Left colon (tissue), 2 donors: ENCODE measurements at regions of chr5 and their contacts with region 1.

Region 1: DNA sequence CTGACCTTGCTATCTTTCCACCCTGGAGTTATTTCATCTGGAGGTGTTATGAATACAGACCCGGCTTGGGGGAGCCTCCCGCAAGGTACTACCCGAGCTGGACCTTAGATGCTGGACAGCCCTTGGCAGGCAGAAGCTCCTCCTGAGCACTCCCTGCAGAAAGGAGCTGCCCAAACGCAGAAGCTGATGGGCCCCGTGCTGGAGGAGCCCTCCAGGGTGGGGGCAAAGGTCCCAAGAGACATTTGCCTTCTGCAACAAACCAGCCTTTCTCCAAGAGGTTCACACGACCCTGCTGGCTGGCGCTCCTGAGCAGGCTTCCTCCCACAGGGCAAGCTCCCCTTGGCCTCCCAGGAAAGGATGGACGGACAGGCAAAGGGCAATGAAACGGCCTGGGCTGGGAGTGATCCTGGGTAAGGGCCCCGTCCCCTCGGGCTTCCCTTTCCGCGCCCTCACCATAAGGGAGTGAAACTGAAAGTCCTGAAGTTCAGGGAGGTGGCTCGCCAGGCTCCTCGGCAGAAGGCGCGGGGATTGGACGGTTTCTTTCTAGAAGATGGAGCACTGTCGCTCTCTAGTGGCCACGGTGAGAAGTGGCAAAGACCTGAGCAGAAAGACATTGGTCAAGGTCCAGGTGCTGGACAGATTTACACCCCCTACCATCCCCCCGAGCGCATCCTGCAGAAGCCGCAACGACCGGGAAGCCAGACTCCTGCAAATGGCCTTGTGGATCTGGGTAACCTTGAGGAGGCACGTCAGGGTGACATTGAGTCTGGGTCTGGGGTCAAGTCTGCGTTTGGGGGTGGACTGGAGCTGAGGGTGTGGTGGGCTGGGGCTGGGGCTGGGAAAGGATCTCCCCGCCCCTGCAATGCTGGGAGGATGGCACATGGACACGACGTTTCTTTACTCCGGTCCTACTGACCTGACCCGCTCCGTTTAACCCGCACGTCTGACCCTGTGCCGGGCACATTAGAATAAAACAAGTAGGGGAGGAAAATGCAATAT is 56.4 kb downstream of the NEURL1B start:
- DNase-seq: peak; percentile 92 to 93
- ATAC-seq: peak; percentile 85

Region 2: DNA sequence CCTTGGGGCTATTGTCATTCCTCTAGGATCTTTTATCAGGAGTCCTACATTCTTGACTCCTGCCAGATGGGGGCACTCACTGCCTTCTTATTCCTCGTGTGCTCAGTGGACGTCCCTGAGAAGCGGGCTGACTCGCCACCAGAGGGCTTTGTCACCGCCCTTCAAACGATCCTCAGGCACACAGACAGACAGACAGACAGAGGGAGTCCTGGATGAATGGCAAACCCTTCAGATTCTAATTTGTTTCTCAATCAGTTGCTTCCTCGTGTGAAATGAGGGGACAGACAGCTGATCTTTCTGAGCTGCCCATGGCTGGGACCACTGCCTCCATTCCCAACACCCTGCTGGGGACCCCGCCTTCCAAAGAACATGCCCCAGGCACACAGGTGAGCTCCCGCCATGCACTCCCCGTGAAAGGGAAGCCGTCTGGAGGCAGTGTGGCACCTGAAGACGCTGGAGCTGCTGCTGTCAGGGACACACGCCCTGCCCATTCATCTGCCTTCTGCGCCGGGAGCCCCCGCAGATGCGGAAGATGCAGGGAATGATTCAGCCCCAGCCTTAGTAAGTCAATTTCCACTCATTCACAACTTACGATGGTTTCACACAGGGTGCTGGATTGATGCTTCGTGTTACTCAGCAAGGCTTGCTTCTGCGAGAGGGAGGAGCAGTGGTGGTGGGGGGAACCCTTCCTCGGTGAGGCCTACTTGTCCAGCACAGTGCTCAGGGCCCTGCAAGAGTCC is 218.2 kb before region 1 on chr5:
- intact Hi-C with region 1: loop called (anchors 2 to 5 kb)
- DNase-seq: peak; percentile 83 to 87
- ATAC-seq: peak; percentile 99

Region 3: DNA sequence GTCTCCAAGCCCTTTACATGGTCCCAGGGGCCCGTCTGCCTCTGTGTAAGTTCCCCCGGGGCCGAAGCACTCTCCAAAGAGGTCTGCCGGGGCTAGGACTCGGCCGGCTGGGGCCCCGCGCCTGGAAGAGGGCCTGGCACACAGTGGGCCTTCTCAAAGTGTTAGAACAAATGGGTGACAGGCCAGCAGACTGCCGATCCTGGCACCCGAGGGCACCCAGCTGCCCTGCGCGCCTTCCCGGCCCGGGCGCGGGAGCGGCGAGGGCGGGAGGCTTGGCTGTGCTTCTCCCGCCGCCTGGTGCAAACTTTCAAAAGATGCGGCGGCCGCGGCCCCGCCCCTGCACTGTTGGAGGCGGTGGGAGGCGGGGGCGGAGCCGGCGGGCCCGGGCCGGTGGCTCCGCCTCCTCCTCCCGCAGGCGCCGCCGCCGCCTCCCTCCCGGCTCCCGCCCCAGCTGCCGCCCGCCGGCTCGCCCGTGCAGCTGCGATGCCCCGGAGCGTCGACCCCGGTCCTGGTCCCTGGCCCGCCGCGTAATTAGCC is 56.5 kb before region 1 on chr5 and contains the start of gene NEURL1B:
- intact Hi-C with region 1: loop called in 1 of 2 experiments (anchors 10 kb)
- DNase-seq: peak; percentile 85 to 89
- ATAC-seq: peak; percentile 55
- total RNA-seq, gene NEURL1B: 60.5 to 90.8 TPM

Region 4: DNA sequence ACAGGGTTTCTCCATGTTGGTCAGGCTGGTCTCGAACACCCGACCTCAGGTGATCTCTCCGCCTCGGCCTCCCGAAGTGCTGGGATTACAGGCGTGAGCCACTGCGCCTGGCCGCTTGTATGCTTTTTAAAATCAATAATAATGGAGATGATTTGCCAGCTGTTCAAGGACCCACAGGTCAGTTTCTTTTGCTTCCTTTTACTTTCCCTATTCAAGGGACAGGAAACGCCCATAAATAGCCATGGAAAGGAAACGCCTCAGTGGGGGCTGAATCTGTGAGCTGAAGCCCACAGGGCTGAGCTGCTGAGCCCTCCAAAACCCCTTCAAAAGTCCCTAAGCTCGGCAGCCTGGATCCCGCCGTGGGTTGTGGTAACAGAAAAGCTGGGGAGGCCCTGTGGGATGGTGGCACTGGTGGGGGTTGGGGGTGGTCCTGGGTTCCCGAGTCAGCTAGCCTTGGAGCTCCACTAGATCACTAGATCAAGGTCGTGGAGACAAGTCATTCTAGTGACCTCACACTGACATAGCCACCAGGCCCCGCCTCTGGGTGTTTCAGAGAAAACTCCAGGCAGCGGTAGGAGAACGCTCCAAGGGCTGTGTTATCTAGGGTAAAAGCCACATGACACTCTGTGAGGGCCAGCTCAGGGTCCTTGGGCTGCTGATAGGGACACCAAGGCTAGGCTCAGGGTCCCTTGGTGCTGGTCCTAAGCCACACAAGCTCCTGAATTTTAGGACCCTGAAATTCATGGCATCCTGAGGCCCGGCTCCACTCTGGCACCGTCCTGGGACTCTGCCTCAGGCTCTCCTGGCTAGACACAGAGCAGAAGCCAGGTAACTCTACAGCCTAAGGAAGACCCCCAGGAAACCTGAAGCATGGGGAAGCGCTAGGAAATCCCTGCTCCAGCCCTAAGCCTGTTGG is 91.6 kb after region 1 on chr5:
- intact Hi-C with region 1: no loop called
- DNase-seq: peak; percentile 30 to 79
- ATAC-seq: peak; percentile 88

Region 5: GRCh38 chr5:173001229-173001841 is 303.9 kb after region 1 on chr5:
- intact Hi-C with region 1: no loop called
- DNase-seq: no peak
- ATAC-seq: no peak